ENCODE measurements at regions of chr1 and their contacts with region 1.

Region 1: GRCh38 chr1:88801575-88802208 is 89.7 kb downstream of the GTF2B start:
- DNase-seq: peak; percentile 12
- ATAC-seq: no peak
- H3K4me3 ChIP-seq: no peak overlapping the region
- H3K4me3 Mint-ChIP-seq: no peak overlapping the region
- H3K27ac ChIP-seq: peak overlapping the region in 1 of 2 donors; percentile 49
- H3K27ac Mint-ChIP-seq: peak overlapping the region; percentile 17
- H3K4me1 ChIP-seq: peaks cover 0 to 6% of the 10 kb centered on the region in 2 donors
- H3K4me1 Mint-ChIP-seq: peaks cover 7% of the 10 kb centered on the region
- H3K27me3 ChIP-seq: no peaks in the 10 kb centered on the region
- H3K27me3 Mint-ChIP-seq: no peaks in the 10 kb centered on the region
- CTCF ChIP-seq: no peak

Region 2: GRCh38 chr1:88780485-88780884 is 21.2 kb before region 1 on chr1:
- CTCF ChIA-PET with region 1: no interaction called
- POLR2A ChIA-PET with region 1: no interaction called
- intact Hi-C with region 1: no loop called
- DNase-seq: no peak
- ATAC-seq: no peak
- H3K4me3 ChIP-seq: no peak overlapping the region
- H3K4me3 Mint-ChIP-seq: no peak overlapping the region
- H3K27ac ChIP-seq: no peak overlapping the region
- H3K27ac Mint-ChIP-seq: no peak overlapping the region
- H3K4me1 ChIP-seq: no peaks in the 10 kb centered on the region
- H3K4me1 Mint-ChIP-seq: no peaks in the 10 kb centered on the region
- H3K27me3 ChIP-seq: no peaks in the 10 kb centered on the region
- H3K27me3 Mint-ChIP-seq: no peaks in the 10 kb centered on the region
- CTCF ChIP-seq: no peak

Region 3: GRCh38 chr1:88813471-88813870 is 11.8 kb after region 1 on chr1:
- CTCF ChIA-PET with region 1: no interaction called
- POLR2A ChIA-PET with region 1: no interaction called
- intact Hi-C with region 1: loop called (anchors 1 kb)
- DNase-seq: no peak
- ATAC-seq: no peak
- H3K4me3 ChIP-seq: no peak overlapping the region
- H3K4me3 Mint-ChIP-seq: no peak overlapping the region
- H3K27ac ChIP-seq: no peak overlapping the region
- H3K27ac Mint-ChIP-seq: no peak overlapping the region
- H3K4me1 ChIP-seq: no peaks in the 10 kb centered on the region
- H3K4me1 Mint-ChIP-seq: no peaks in the 10 kb centered on the region
- H3K27me3 ChIP-seq: no peaks in the 10 kb centered on the region
- H3K27me3 Mint-ChIP-seq: no peaks in the 10 kb centered on the region
- CTCF ChIP-seq: no peak

Region 4: GRCh38 chr1:88922214-88922613 is 120.5 kb after region 1 on chr1:
- CTCF ChIA-PET with region 1: no interaction called
- POLR2A ChIA-PET with region 1: no interaction called
- intact Hi-C with region 1: no loop called
- DNase-seq: no peak
- ATAC-seq: no peak
- H3K4me3 ChIP-seq: no peak overlapping the region
- H3K4me3 Mint-ChIP-seq: no peak overlapping the region
- H3K27ac ChIP-seq: no peak overlapping the region
- H3K27ac Mint-ChIP-seq: no peak overlapping the region
- H3K4me1 ChIP-seq: no peaks in the 10 kb centered on the region
- H3K4me1 Mint-ChIP-seq: no peaks in the 10 kb centered on the region
- H3K27me3 ChIP-seq: no peaks in the 10 kb centered on the region
- H3K27me3 Mint-ChIP-seq: no peaks in the 10 kb centered on the region
- CTCF ChIP-seq: no peak

Region 5: GRCh38 chr1:89201106-89201794 is 399.6 kb after region 1 on chr1:
- CTCF ChIA-PET with region 1: no interaction called
- POLR2A ChIA-PET with region 1: no interaction called
- intact Hi-C with region 1: no loop called
- DNase-seq: peak; percentile 51
- ATAC-seq: peak; percentile 71
- H3K4me3 ChIP-seq: peak overlapping the region in 1 of 5 experiments; percentile 7
- H3K4me3 Mint-ChIP-seq: peak overlapping the region; percentile 79
- H3K27ac ChIP-seq: peak overlapping the region; percentile 63 to 85
- H3K27ac Mint-ChIP-seq: peak overlapping the region; percentile 88
- H3K4me1 ChIP-seq: peaks cover 28 to 30% of the 10 kb centered on the region in 2 donors
- H3K4me1 Mint-ChIP-seq: peaks cover 38% of the 10 kb centered on the region
- H3K27me3 ChIP-seq: no peaks in the 10 kb centered on the region
- H3K27me3 Mint-ChIP-seq: no peaks in the 10 kb centered on the region
- CTCF ChIP-seq: no peak